CD4-positive, alpha-beta memory T cell (primary cell): ENCODE measurements at regions of chr18 and their contacts with region 1.

Region 1: GRCh38 chr18:658001-658946 is 821 bp downstream of the TYMS start:
- DNase-seq: peak in 3 of 5 donors; percentile 28 to 36 (median 31)
- H3K4me3 ChIP-seq: peak overlapping the region; percentile 54 to 85
- H3K4me3 Mint-ChIP-seq: peak overlapping the region; percentile 84 to 92 (median 89)
- H3K27ac ChIP-seq: peak overlapping the region; percentile 13
- H3K27ac Mint-ChIP-seq: peak overlapping the region in 2 of 7 donors; percentile 77 to 81
- H3K4me1 ChIP-seq: no peaks in the 10 kb centered on the region
- H3K4me1 Mint-ChIP-seq: peaks cover 8 to 17% (median 13%) of the 10 kb centered on the region in 4 donors
- H3K27me3 ChIP-seq: no peaks in the 10 kb centered on the region
- H3K27me3 Mint-ChIP-seq: peaks cover 6 to 30% of the 10 kb centered on the region in 2 donors

Region 2: DNA sequence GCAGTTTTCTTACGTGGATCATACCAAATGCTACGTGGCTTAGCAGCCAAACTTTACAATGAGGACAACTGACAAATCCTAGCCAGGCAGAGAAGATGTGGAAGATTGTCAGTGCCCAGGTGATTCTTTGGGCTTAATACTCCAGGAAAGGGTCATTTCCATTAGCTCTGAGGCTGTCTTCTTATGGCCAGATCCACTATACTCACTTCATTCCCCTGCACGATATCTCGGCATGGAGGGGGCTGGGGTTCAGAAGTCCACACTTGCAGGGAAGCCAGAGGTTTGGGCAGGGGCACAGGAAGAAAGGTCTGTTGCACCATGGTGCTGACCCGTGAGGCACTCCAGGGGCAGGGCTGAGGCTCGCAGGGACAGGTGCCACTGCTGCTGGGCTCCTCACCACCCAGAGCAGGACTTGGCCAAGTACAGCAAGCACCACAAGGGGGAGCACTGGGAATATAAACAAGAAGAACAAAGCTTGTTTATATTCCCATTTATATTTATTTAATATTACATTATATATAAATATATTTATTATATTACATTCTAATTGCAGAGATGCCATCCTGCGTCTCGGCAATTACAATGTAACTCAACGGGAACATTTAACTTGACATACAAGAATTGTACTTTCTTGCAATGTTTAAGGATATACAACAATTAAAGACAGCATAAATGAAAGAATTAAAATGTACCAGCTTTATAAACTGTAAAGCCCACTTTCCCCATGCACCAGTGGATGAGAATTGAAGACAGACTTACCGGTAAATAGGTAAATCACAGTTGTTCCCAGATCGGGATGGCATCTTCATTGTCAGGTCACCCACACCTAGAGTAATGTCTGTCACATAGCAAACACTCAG is 34.3 kb before region 1 on chr18:
- CTCF ChIA-PET with region 1: interaction called, 11 read pairs
- POLR2A ChIA-PET with region 1: no interaction called
- intact Hi-C with region 1: no loop called
- DNase-seq: peak; percentile 30 to 58 (median 44)
- H3K4me3 ChIP-seq: no peak overlapping the region
- H3K4me3 Mint-ChIP-seq: no peak overlapping the region
- H3K27ac ChIP-seq: no peak overlapping the region
- H3K27ac Mint-ChIP-seq: no peak overlapping the region
- H3K4me1 ChIP-seq: no peaks in the 10 kb centered on the region
- H3K4me1 Mint-ChIP-seq: peaks cover 0 to 2% (median 0%) of the 10 kb centered on the region in 4 donors
- H3K27me3 ChIP-seq: no peaks in the 10 kb centered on the region
- H3K27me3 Mint-ChIP-seq: peaks cover 3 to 26% of the 10 kb centered on the region in 2 donors